AG04450 (cell line): ENCODE measurements at regions of chr10 and their contacts with region 1.

Region 1: GRCh38 chr10:21495752-21496342 is 29.6 kb downstream of the SKIDA1 start:
- DNase-seq: no peak
- H3K4me3 ChIP-seq: peak overlapping the region; percentile 85
- H3K27ac ChIP-seq: peak overlapping the region; percentile 31
- H3K27me3 ChIP-seq: no peaks in the 10 kb centered on the region
- CTCF ChIP-seq: peak; percentile 78

Region 2: GRCh38 chr10:21413268-21413667 is 82.6 kb before region 1 on chr10:
- CTCF ChIA-PET with region 1: no interaction called
- POLR2A ChIA-PET with region 1: no interaction called
- DNase-seq: no peak
- H3K4me3 ChIP-seq: no peak overlapping the region
- H3K27ac ChIP-seq: no peak overlapping the region
- H3K27me3 ChIP-seq: no peaks in the 10 kb centered on the region
- CTCF ChIP-seq: no peak

Region 3: GRCh38 chr10:21516242-21517131 is 20.6 kb after region 1 on chr10:
- CTCF ChIA-PET with region 1: interaction called, 10 read pairs
- POLR2A ChIA-PET with region 1: interaction called, 10 read pairs
- DNase-seq: no peak
- H3K4me3 ChIP-seq: peak overlapping the region; percentile 70
- H3K27ac ChIP-seq: peak overlapping the region; percentile 58
- H3K27me3 ChIP-seq: no peaks in the 10 kb centered on the region
- CTCF ChIP-seq: no peak